Mammary epithelial cell (primary cell): ENCODE measurements at regions of chr3 and their contacts with region 1.

Region 1: DNA sequence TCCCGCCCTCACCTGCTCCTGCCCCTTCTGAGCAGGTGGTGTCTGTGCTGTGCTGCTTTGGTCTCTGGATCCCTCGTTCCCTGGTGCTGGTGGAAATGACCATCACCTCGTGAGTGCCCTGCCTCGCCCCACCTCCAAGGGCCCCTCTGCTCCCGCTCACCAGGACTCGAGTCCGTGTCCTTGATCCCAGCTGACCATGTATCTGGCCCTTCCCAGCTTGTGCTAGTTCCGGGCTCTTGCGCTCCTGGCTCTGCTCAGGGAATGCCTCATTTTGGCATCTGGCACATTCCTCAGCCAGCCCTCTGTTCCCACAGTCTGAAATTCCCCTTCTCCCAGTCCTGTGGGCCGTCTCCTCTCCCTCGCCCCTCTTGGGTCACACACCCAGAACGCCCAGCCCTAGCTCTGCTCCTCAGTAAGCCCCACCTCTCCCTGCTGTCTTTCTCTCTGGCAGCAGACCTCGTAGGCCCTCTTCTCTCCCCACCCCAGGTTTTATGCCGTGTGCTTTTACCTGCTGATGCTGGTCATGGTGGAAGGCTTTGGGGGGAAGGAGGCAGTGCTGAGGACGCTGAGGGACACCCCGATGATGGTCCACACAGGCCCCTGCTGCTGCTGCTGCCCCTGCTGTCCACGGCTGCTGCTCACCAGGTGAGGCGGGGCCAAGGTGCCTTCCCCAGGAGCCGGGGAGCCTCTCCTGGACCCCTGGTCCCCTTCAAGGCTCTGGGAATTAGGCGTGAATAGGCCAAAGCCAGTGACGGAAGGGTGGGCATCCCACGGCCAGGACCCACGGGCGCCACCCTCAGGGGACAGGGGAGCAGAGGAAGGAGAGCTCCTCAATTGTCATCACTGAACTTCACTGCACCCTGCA is 11.5 kb downstream of the SLC51A start:
- DNase-seq: no peak
- H3K4me3 ChIP-seq: no peak overlapping the region
- H3K27ac ChIP-seq: no peak overlapping the region
- H3K4me1 ChIP-seq: no peaks in the 10 kb centered on the region
- H3K27me3 ChIP-seq: no peaks in the 10 kb centered on the region
- CTCF ChIP-seq: no peak

Region 2: GRCh38 chr3:196463804-196464203 is 235.9 kb after region 1 on chr3:
- CTCF ChIA-PET with region 1: no interaction called
- dilution Hi-C with region 1: loop called (anchors 5 kb)
- in situ Hi-C with region 1: no loop called
- intact Hi-C with region 1: no loop called
- DNase-seq: no peak
- H3K4me3 ChIP-seq: no peak overlapping the region
- H3K27ac ChIP-seq: no peak overlapping the region
- H3K4me1 ChIP-seq: no peaks in the 10 kb centered on the region
- H3K27me3 ChIP-seq: no peaks in the 10 kb centered on the region
- CTCF ChIP-seq: no peak